ENCODE measurements at regions of chr17 and their contacts with region 1.

Region 1: DNA sequence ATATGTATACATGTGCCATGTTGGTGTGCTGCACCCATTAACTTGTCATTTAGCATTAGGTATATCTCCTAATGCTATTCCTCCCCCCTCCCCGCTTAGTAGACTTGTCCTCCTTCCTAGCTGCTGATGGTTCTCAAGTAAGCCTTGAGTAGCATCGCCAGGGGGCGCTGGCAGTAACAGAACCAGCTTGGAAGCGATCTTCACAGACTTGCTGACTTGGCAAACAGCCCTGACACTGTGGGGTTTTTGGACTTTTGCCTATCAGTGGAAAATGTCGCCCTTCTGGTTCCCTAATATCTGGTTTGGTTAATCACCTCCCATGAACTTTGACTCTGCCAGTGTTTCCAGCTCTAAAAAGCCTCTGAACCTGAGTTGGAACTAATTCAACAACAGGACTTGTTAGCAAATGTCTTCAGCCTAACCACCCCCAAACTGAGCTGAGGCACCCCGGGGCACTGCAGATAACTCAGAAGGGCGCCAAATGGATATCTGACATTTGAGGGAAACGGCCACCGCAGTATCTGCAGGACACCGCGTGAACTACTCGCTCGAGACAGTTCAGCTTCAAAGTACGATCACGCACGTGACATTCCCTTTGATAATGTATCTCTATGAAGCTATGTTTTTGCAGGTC is 15.4 kb upstream of the SPATA32 start:
- DNase-seq: peak; percentile 97
- ATAC-seq: peak; percentile 87
- H3K4me3 ChIP-seq: no peak overlapping the region
- H3K27ac ChIP-seq: no peak overlapping the region
- H3K4me1 ChIP-seq: peaks cover 9% of the 10 kb centered on the region
- H3K27me3 ChIP-seq: no peaks in the 10 kb centered on the region
- CTCF ChIP-seq: peak; percentile 90

Region 2: GRCh38 chr17:45265821-45266220 is 11.5 kb before region 1 on chr17:
- CTCF ChIA-PET with region 1: interaction called, 11 read pairs
- POLR2A ChIA-PET with region 1: no interaction called
- intact Hi-C with region 1: no loop called
- DNase-seq: peak; percentile 61
- ATAC-seq: peak; percentile 47
- H3K4me3 ChIP-seq: no peak overlapping the region
- H3K27ac ChIP-seq: no peak overlapping the region
- H3K4me1 ChIP-seq: peaks cover 26% of the 10 kb centered on the region
- H3K27me3 ChIP-seq: no peaks in the 10 kb centered on the region
- CTCF ChIP-seq: no peak

Region 3: DNA sequence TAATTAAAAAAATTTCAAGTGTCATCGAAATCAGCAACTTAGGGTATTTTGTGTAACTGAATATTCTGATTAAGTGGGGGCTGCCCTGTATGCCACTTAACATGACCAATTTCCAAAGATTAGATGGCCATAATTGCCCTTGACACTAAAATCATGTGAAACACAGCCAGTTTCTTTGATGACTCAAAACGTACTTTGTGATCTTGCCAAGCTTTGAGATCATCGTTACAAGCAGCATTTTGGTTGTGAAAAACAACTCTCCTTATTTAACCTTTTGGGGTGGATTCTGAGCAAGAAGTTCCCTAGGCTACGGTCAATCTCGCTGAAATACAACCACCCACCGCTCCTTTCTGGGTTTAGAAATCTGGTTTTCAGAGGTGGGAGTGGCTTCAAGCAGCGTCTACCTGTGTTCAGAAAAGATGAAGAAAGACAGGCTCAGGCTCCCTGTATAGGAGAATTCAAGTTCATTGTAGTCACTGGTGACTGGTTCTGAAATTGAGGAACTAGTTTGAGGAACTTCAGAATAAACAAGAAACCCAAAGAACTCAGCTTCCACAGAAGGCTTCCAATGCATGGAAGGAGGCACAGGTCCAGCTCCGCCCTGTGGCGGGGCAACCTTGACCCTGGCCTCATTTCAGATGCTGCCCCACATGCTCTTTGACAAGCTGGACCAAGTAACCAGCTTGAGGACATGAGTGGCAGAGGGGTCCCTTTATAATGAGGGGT is 30.1 kb after region 1 on chr17:
- CTCF ChIA-PET with region 1: interaction called, 23 read pairs
- POLR2A ChIA-PET with region 1: no interaction called
- intact Hi-C with region 1: no loop called
- DNase-seq: peak; percentile 91
- ATAC-seq: peak; percentile 12
- H3K4me3 ChIP-seq: peak overlapping the region; percentile 1; the same call in 1 of the 2 replicates
- H3K27ac ChIP-seq: peak overlapping the region; percentile 70
- H3K4me1 ChIP-seq: peaks cover 53% of the 10 kb centered on the region
- H3K27me3 ChIP-seq: no peaks in the 10 kb centered on the region
- CTCF ChIP-seq: no peak

Region 4: GRCh38 chr17:45451141-45451540 is 173.8 kb after region 1 on chr17:
- CTCF ChIA-PET with region 1: no interaction called
- POLR2A ChIA-PET with region 1: no interaction called
- intact Hi-C with region 1: no loop called
- DNase-seq: no peak
- ATAC-seq: no peak
- H3K4me3 ChIP-seq: no peak overlapping the region
- H3K27ac ChIP-seq: no peak overlapping the region
- H3K4me1 ChIP-seq: peaks cover 8% of the 10 kb centered on the region
- H3K27me3 ChIP-seq: no peaks in the 10 kb centered on the region
- CTCF ChIP-seq: peak; percentile 33; the same call in 1 of the 2 replicates

Region 5: GRCh38 chr17:45666046-45666600 is 388.8 kb after region 1 on chr17:
- CTCF ChIA-PET with region 1: no interaction called
- POLR2A ChIA-PET with region 1: no interaction called
- intact Hi-C with region 1: no loop called
- DNase-seq: peak; percentile 17
- ATAC-seq: 0 out of 2 replicates have a peak, but pooled peaks have one; percentile 24
- H3K4me3 ChIP-seq: no peak overlapping the region
- H3K27ac ChIP-seq: no peak overlapping the region
- H3K4me1 ChIP-seq: no peaks in the 10 kb centered on the region
- H3K27me3 ChIP-seq: peaks cover 57% of the 10 kb centered on the region
- CTCF ChIP-seq: peak; percentile 57

Measured in PC-3 (cell line).